Activated CD4-positive, alpha-beta T cell treated with anti-CD3 and anti-CD28 coated beads for 36 hours (primary cell): ENCODE measurements at regions of chr10 and their contacts with region 1.

Region 1: GRCh38 chr10:8321990-8322389 is 267.5 kb downstream of the GATA3 start:
- DNase-seq: no peak
- ATAC-seq: no peak
- H3K4me3 Mint-ChIP-seq: no peak overlapping the region
- H3K27ac Mint-ChIP-seq: no peak overlapping the region
- H3K4me1 Mint-ChIP-seq: peaks cover 32% of the 10 kb centered on the region
- H3K27me3 Mint-ChIP-seq: peaks cover 2% of the 10 kb centered on the region

Region 2: DNA sequence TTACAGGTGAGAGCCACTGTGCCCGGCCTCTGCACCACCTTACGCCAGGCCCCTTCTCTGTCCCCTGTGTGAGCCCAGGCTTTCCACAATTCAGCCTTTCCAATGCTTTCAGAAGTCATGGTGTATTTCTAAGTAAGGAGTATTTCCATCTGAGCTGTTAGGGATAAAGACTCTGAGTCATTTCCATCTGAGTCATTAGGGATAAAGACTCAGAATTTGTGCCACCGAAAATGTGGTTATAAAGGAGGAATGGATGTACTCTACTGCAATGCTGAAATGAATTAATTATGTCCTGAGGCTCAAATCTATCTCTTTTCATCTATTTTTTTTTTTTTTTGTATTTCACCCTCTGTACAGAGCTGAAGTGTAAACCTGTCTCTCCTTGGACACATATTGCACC is 183.5 kb before region 1 on chr10:
- CTCF ChIA-PET with region 1: no interaction called
- POLR2A ChIA-PET with region 1: no interaction called
- intact Hi-C with region 1: loop called (anchors 2 to 5 kb)
- DNase-seq: no peak
- ATAC-seq: no peak
- H3K4me3 Mint-ChIP-seq: no peak overlapping the region
- H3K27ac Mint-ChIP-seq: peak overlapping the region; percentile 60
- H3K4me1 Mint-ChIP-seq: peaks cover 36% of the 10 kb centered on the region
- H3K27me3 Mint-ChIP-seq: peaks cover 2% of the 10 kb centered on the region

Region 3: DNA sequence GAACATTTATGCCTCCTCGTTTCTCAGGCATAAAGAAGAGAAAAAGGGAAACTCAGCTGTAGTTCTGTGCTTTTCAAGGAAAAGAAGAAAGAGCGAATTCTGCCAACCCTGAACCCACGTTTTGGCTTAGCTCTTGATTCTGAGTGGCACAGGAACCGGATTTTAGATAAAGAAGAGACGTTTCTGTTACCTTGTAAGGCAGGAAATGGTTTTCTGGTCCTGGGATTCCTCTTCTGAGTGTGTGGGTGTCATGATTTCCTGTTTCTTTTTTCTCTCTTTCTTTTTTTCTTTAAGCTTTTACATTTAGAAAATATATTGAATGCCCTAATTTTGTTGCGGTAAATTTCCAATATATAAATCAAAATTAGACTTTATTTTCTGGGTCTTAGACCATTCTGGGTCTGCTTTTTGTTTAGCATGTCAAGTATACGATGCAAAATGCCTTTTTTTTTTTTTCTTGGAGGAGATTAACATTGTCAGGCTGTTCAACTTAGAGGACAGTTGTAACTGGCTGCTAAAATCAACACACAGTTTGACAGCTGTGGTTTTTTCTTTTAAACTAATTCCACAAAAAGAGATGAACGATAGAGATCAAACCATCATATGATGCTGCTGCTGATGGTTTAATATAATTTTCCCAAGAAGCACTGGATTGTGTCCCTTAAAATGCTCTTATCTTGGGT is 76.7 kb before region 1 on chr10:
- CTCF ChIA-PET with region 1: no interaction called
- POLR2A ChIA-PET with region 1: no interaction called
- intact Hi-C with region 1: loop called in 1 of 2 experiments (anchors 5 kb)
- DNase-seq: no peak
- ATAC-seq: no peak
- H3K4me3 Mint-ChIP-seq: peak overlapping the region; percentile 48
- H3K27ac Mint-ChIP-seq: peak overlapping the region; percentile 70
- H3K4me1 Mint-ChIP-seq: peaks cover 49% of the 10 kb centered on the region
- H3K27me3 Mint-ChIP-seq: no peaks in the 10 kb centered on the region

Region 4: DNA sequence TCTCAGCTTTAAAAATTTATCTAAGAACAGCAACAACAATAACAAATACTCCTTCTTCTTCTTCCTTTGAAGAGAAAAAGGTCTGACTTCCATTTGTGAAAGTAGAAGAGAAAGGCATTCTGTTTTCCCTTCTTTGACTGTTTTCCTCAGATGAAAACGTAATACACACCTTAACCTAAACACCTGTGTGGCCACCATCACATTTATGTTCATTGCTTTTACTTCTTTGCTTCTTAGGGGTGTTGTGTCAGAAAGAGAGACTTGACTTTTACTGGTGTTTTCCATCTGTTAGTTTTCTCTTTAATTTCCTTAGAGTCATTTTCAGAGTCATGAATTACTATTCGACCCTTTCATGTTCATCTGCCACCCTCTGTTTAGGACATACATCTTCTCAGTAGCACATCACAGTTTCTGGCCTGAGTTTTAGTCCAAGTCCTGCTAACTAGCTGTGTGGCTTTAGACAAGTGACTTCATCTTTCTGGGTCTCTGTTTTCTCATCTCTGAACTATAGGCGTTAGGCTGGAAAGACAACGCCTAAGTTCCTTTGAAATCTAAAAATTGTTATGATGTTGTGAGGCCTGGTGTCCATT is 16.3 kb after region 1 on chr10:
- CTCF ChIA-PET with region 1: interaction called, 3 read pairs
- POLR2A ChIA-PET with region 1: no interaction called
- intact Hi-C with region 1: loop called in 1 of 2 experiments (anchors 1 kb)
- DNase-seq: peak; percentile 27
- ATAC-seq: peak; percentile 96
- H3K4me3 Mint-ChIP-seq: peak overlapping the region; percentile 14
- H3K27ac Mint-ChIP-seq: peak overlapping the region; percentile 86
- H3K4me1 Mint-ChIP-seq: peaks cover 31% of the 10 kb centered on the region
- H3K27me3 Mint-ChIP-seq: no peaks in the 10 kb centered on the region

Region 5: GRCh38 chr10:8577686-8578085 is 255.7 kb after region 1 on chr10:
- CTCF ChIA-PET with region 1: no interaction called
- POLR2A ChIA-PET with region 1: interaction called, 3 read pairs
- intact Hi-C with region 1: loop called in 1 of 2 experiments (anchors 5 kb)
- DNase-seq: peak; percentile 12
- ATAC-seq: peak; percentile 71
- H3K4me3 Mint-ChIP-seq: no peak overlapping the region
- H3K27ac Mint-ChIP-seq: peak overlapping the region; percentile 59
- H3K4me1 Mint-ChIP-seq: peaks cover 36% of the 10 kb centered on the region
- H3K27me3 Mint-ChIP-seq: peaks cover 31% of the 10 kb centered on the region

Region 6: GRCh38 chr10:8998751-8999150 is 676.8 kb after region 1 on chr10:
- CTCF ChIA-PET with region 1: no interaction called
- POLR2A ChIA-PET with region 1: no interaction called
- intact Hi-C with region 1: loop called in 1 of 2 experiments (anchors 10 kb)
- DNase-seq: no peak
- ATAC-seq: no peak
- H3K4me3 Mint-ChIP-seq: no peak overlapping the region
- H3K27ac Mint-ChIP-seq: no peak overlapping the region
- H3K4me1 Mint-ChIP-seq: peaks cover 31% of the 10 kb centered on the region
- H3K27me3 Mint-ChIP-seq: no peaks in the 10 kb centered on the region